GM12878 (cell line): ENCODE measurements at regions of chr1 and their contacts with region 1.

Region 1: GRCh38 chr1:168234846-168235547 is 9.2 kb downstream of the SFT2D2 start:
- DNase-seq: no peak
- ATAC-seq: peak; percentile 98
- H3K4me3 ChIP-seq: no peak overlapping the region
- H3K27ac ChIP-seq: no peak overlapping the region
- H3K4me1 ChIP-seq: no peaks in the 10 kb centered on the region; the same call in 1 of the 2 replicates
- H3K27me3 ChIP-seq: no peaks in the 10 kb centered on the region
- CTCF ChIP-seq: peak; percentile 63 to 80 (median 79)
- EP300 ChIP-seq: no peak
- POLR2A ChIP-seq: no peak
- RAD21 ChIP-seq: peak; percentile 69

Region 2: DNA sequence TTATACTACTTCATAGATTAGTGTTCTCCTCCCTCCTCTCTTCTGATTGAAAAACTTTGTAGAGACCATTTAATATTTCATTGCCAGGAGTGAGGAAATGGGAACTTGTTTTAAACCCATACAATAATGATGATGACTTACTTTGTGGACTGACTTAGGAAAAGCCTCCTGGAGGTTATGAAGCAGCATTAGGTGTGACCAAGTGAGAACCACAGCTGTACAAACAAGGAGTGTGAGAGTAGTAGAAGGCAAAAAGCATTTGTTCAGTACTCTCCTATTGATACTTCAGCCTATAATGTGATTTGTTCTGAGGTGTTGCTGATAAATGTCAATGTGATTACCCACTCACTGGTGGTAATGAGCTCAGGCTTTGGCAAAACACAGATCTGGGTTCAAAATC is 47.8 kb before region 1 on chr1:
- CTCF ChIA-PET with region 1: interaction called, 11 read pairs
- POLR2A ChIA-PET with region 1: no interaction called
- RAD21 ChIA-PET with region 1: interaction called, 3 read pairs
- SMC1A ChIA-PET with region 1: interaction called, 4 read pairs
- in situ Hi-C with region 1: no loop called
- intact Hi-C with region 1: no loop called
- DNase-seq: no peak
- ATAC-seq: no peak; the same call in 2 of the 3 replicates
- H3K4me3 ChIP-seq: no peak overlapping the region
- H3K27ac ChIP-seq: no peak overlapping the region
- H3K4me1 ChIP-seq: no peaks in the 10 kb centered on the region
- H3K27me3 ChIP-seq: no peaks in the 10 kb centered on the region
- CTCF ChIP-seq: no peak
- EP300 ChIP-seq: no peak
- POLR2A ChIP-seq: no peak
- RAD21 ChIP-seq: no peak

Region 3: DNA sequence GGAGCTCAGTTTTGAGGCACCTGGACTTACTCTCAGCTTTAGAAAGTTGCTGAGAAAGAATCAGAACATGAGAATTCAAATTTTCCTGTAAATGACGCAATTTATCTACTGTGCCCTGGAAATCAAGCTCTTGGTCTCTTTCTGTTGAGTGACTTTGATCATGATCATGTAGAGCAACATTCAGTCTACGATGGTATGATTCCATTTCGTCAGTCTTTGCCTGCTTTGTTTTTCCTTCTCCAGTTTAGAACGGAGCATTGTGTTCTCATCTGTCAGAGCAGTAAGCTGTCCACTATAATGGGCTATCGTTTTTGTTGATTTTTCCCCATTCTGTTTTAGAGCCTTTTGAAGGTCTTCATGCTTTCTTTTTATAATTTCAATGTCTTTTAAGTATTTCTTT is 11.5 kb after region 1 on chr1:
- CTCF ChIA-PET with region 1: interaction called, 17 read pairs
- POLR2A ChIA-PET with region 1: interaction called, 4 read pairs
- RAD21 ChIA-PET with region 1: interaction called, 3 read pairs
- SMC1A ChIA-PET with region 1: interaction called, 6 read pairs
- in situ Hi-C with region 1: no loop called
- intact Hi-C with region 1: no loop called
- DNase-seq: no peak
- ATAC-seq: no peak
- H3K4me3 ChIP-seq: no peak overlapping the region
- H3K27ac ChIP-seq: no peak overlapping the region
- H3K4me1 ChIP-seq: 0 out of 2 replicates have a peak, but pooled peaks cover 2% of the 10 kb centered on the region
- H3K27me3 ChIP-seq: no peaks in the 10 kb centered on the region
- CTCF ChIP-seq: no peak
- EP300 ChIP-seq: no peak
- POLR2A ChIP-seq: no peak
- RAD21 ChIP-seq: no peak

Region 4: GRCh38 chr1:168321945-168322344 is 86.9 kb after region 1 on chr1:
- CTCF ChIA-PET with region 1: interaction called, 23 read pairs
- POLR2A ChIA-PET with region 1: no interaction called
- RAD21 ChIA-PET with region 1: interaction called, 12 read pairs
- SMC1A ChIA-PET with region 1: interaction called, 14 read pairs
- in situ Hi-C with region 1: no loop called
- intact Hi-C with region 1: loop called (anchors 1 kb)
- DNase-seq: no peak
- ATAC-seq: peak; percentile 84
- H3K4me3 ChIP-seq: no peak overlapping the region
- H3K27ac ChIP-seq: no peak overlapping the region
- H3K4me1 ChIP-seq: no peaks in the 10 kb centered on the region
- H3K27me3 ChIP-seq: no peaks in the 10 kb centered on the region
- CTCF ChIP-seq: peak; percentile 27 to 47 (median 37); a peak in 4 of 6 replicates
- EP300 ChIP-seq: no peak
- POLR2A ChIP-seq: no peak
- RAD21 ChIP-seq: peak; percentile 49

Region 5: GRCh38 chr1:169711469-169712281 is 1476.7 kb after region 1 on chr1 and contains the start of gene SELL:
- CTCF ChIA-PET with region 1: no interaction called
- POLR2A ChIA-PET with region 1: no interaction called
- RAD21 ChIA-PET with region 1: no interaction called
- SMC1A ChIA-PET with region 1: no interaction called
- in situ Hi-C with region 1: no loop called
- intact Hi-C with region 1: no loop called
- DNase-seq: peak; percentile 90
- ATAC-seq: peak; percentile 79
- H3K4me3 ChIP-seq: peak within 1 kb of the TSS; percentile 45
- H3K27ac ChIP-seq: peak within 1 kb of the TSS; percentile 49
- H3K4me1 ChIP-seq: peaks cover 4% of the 10 kb centered on the region; the same call in 1 of the 2 replicates
- H3K27me3 ChIP-seq: no peaks in the 10 kb centered on the region
- CTCF ChIP-seq: peak; percentile 91 to 98 (median 95)
- EP300 ChIP-seq: no peak
- POLR2A ChIP-seq: peak; percentile 44; the same call in 1 of the 2 replicates
- RAD21 ChIP-seq: peak; percentile 99
- polyA plus RNA-seq, gene SELL: 53.5 to 63.2 TPM